CD8-positive, alpha-beta memory T cell (primary cell): ENCODE measurements at regions of chr2 and their contacts with region 1.

Region 1: GRCh38 chr2:3558205-3559014 is at the start of gene RNASEH1:
- DNase-seq: peak; percentile 96 to 98 (median 97)
- H3K4me3 ChIP-seq: peak within 1 kb of the TSS; percentile 49
- H3K4me3 Mint-ChIP-seq: peak within 1 kb of the TSS; percentile 88 to 98 (median 91)
- H3K27ac ChIP-seq: peak within 1 kb of the TSS; percentile 96
- H3K27ac Mint-ChIP-seq: peak within 1 kb of the TSS; percentile 94 to 99 (median 97)
- H3K4me1 ChIP-seq: peaks cover 18% of the 10 kb centered on the region
- H3K4me1 Mint-ChIP-seq: peaks cover 15 to 44% (median 38%) of the 10 kb centered on the region in 3 donors
- H3K27me3 ChIP-seq: no peaks in the 10 kb centered on the region
- H3K27me3 Mint-ChIP-seq: no peaks in the 10 kb centered on the region
- total RNA-seq, gene RNASEH1: 36.5 to 38.1 TPM

Region 2: GRCh38 chr2:3377612-3378432 is 180.6 kb before region 1 on chr2 and contains the start of gene EIPR1:
- CTCF ChIA-PET with region 1: interaction called, 4 read pairs
- POLR2A ChIA-PET with region 1: interaction called, 11 read pairs
- DNase-seq: peak; percentile 93 to 98 (median 96)
- H3K4me3 ChIP-seq: peak within 1 kb of the TSS; percentile 98
- H3K4me3 Mint-ChIP-seq: peak within 1 kb of the TSS; percentile 94 to 97 (median 97)
- H3K27ac ChIP-seq: peak within 1 kb of the TSS; percentile 90
- H3K27ac Mint-ChIP-seq: peak within 1 kb of the TSS; percentile 94 to 99 (median 98)
- H3K4me1 ChIP-seq: peaks cover 35% of the 10 kb centered on the region
- H3K4me1 Mint-ChIP-seq: peaks cover 46 to 62% (median 53%) of the 10 kb centered on the region in 3 donors
- H3K27me3 ChIP-seq: no peaks in the 10 kb centered on the region
- H3K27me3 Mint-ChIP-seq: peaks cover 0 to 1% of the 10 kb centered on the region in 2 donors
- total RNA-seq, gene EIPR1: 41.6 to 43.9 TPM

Region 3: DNA sequence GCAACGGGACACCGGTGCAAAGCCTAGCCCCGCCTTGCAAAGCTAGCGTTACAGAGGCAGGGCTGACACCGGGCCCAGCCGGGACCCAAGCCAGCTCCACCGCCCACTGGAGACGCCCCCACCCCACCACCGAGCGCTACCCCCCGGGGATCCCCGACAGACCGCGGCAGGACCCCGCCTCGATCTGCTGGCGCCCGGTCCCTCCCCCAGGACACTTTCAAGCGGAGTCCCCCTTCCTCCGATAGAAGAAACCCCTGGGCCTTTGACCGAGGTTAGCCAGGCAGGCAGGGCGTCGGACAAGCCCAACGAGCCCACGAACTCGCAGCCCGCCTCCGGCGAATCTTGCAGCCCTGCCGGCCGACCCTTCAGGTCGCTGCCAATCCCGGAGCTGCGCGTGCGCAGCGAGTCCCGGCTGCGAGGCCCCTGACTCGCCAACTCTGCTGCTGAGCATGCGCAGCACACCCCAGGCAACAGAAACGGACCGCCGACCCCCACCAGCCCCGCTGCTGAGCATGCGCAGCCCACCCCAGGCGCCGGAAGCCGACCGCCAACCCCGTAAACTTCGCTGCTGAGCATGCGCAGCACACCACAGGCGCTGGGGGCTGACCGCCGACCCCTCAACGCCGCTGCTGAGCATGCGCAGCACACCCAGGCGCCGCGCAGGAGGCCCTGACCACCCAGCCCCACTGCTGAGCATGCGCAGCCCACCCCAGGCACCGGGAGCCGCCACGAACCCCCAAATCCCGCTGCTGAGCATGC is 39.7 kb before region 1 on chr2:
- CTCF ChIA-PET with region 1: interaction called, 7 read pairs
- POLR2A ChIA-PET with region 1: interaction called, 32 read pairs
- DNase-seq: peak; percentile 97 to 100 (median 99)
- H3K4me3 ChIP-seq: peak overlapping the region; percentile 80
- H3K4me3 Mint-ChIP-seq: peak overlapping the region; percentile 84 to 95 (median 91)
- H3K27ac ChIP-seq: peak overlapping the region; percentile 93
- H3K27ac Mint-ChIP-seq: peak overlapping the region; percentile 91 to 97 (median 94)
- H3K4me1 ChIP-seq: peaks cover 26% of the 10 kb centered on the region
- H3K4me1 Mint-ChIP-seq: peaks cover 30 to 37% (median 33%) of the 10 kb centered on the region in 3 donors
- H3K27me3 ChIP-seq: no peaks in the 10 kb centered on the region
- H3K27me3 Mint-ChIP-seq: peaks cover 0 to 9% of the 10 kb centered on the region in 2 donors

Region 4: GRCh38 chr2:3575534-3576262 is 17.3 kb after region 1 on chr2:
- CTCF ChIA-PET with region 1: interaction called, 25 read pairs
- POLR2A ChIA-PET with region 1: interaction called, 24 read pairs
- DNase-seq: peak; percentile 26 to 60 (median 32)
- H3K4me3 ChIP-seq: peak overlapping the region; percentile 76
- H3K4me3 Mint-ChIP-seq: peak overlapping the region; percentile 90 to 98 (median 92)
- H3K27ac ChIP-seq: peak overlapping the region; percentile 85
- H3K27ac Mint-ChIP-seq: peak overlapping the region; percentile 96 to 99 (median 98)
- H3K4me1 ChIP-seq: peaks cover 36% of the 10 kb centered on the region
- H3K4me1 Mint-ChIP-seq: peaks cover 44 to 47% (median 46%) of the 10 kb centered on the region in 3 donors
- H3K27me3 ChIP-seq: no peaks in the 10 kb centered on the region
- H3K27me3 Mint-ChIP-seq: peaks cover 0 to 2% of the 10 kb centered on the region in 2 donors

Region 5: DNA sequence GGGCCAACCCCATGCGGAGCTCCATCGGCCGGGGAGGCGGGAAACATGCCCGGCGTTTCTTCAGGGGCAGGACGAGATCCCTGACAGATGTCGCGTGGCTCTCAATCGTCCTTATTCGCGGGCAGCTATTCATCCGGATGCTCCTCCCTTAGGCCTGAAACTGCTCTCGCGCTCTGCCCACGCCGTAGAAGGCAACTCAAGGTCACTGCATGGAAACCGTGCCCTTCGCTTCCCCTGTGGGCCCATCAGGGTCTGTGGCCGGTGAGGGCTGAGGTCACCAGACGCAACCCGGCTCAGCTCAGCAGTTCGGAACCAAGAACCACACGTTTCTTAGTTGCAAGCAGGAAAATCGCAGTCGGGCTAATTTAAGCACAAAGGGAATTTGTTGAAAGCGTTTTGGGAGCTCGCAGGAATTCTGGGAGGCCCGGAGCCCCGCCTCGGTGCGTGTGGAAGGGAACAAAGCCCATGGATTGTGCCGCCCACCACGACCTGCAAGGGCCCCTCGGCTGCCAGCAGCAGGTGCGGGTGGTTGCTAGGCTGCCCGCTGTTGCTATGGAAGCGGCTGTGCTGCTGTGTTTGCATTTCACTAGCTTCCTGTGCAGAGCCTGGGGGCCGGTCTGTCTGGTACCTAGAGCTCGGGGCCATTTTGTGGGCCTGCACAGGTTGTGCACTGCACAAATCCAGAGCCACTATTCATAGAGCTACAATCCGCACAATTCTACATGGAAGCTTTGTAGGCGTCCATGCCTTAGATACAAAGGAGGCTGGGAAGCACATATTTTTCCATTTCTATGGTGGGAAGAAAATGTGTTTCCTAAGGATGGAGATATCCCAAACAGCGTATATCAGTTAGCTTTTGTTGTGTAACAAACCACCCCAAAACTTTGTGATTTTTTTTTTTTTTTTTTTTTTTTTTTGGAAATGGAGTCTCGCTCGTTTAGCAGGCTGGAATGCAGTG is 93.6 kb after region 1 on chr2:
- CTCF ChIA-PET with region 1: interaction called, 11 read pairs
- POLR2A ChIA-PET with region 1: interaction called, 9 read pairs
- DNase-seq: peak; percentile 33 to 89 (median 75)
- H3K4me3 ChIP-seq: peak overlapping the region; percentile 66
- H3K4me3 Mint-ChIP-seq: peak overlapping the region; percentile 79 to 96 (median 89)
- H3K27ac ChIP-seq: peak overlapping the region; percentile 32
- H3K27ac Mint-ChIP-seq: peak overlapping the region in 7 of 8 donors; percentile 87 to 98 (median 95)
- H3K4me1 ChIP-seq: peaks cover 9% of the 10 kb centered on the region
- H3K4me1 Mint-ChIP-seq: peaks cover 11 to 18% (median 16%) of the 10 kb centered on the region in 3 donors
- H3K27me3 ChIP-seq: no peaks in the 10 kb centered on the region
- H3K27me3 Mint-ChIP-seq: peaks cover 0 to 11% of the 10 kb centered on the region in 2 donors

Region 6: DNA sequence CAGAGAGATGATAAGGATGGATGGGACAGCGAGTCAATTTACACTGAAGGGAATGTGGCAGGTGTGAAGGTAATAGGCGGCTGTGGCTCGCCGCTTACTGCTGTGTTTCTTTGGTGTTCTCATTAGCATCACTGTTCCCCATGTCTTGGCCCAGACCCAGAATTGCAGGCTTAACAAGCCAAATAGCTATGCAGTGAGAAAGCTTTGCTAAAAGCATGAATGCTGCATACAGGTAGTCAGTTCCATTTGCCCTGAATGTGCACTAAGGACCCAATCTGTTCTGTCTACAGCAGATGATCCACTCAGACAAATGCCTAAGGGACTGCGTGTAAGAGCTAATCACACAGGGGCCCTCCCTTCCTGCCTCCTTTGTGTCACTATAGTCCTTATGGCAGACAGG is 407.5 kb after region 1 on chr2:
- CTCF ChIA-PET with region 1: no interaction called
- POLR2A ChIA-PET with region 1: no interaction called
- DNase-seq: no peak
- H3K4me3 ChIP-seq: no peak overlapping the region
- H3K4me3 Mint-ChIP-seq: no peak overlapping the region
- H3K27ac ChIP-seq: no peak overlapping the region
- H3K27ac Mint-ChIP-seq: no peak overlapping the region
- H3K4me1 ChIP-seq: no peaks in the 10 kb centered on the region
- H3K4me1 Mint-ChIP-seq: no peaks in the 10 kb centered on the region
- H3K27me3 ChIP-seq: no peaks in the 10 kb centered on the region
- H3K27me3 Mint-ChIP-seq: peaks cover 0 to 4% of the 10 kb centered on the region in 2 donors

Region 7: DNA sequence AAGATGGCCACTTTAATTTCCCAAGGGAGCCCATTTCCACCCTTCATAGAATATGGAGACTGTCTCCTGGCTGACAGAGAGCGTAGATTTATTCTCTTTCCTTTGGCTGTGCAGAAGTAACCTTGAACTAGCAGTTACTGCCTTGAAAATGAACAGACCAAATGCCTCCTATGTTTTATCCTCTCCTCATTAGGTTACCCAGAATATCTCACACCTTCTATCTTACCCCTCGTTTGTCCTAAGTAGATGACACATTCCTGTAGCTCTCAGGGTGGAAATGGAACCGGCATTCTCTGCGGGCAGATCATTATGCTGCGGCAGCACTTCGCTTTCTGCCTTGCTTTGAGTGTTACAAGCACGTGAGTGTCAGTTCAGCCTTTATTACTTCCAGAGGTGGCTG is 481.5 kb after region 1 on chr2:
- CTCF ChIA-PET with region 1: no interaction called
- POLR2A ChIA-PET with region 1: no interaction called
- DNase-seq: no peak
- H3K4me3 ChIP-seq: no peak overlapping the region
- H3K4me3 Mint-ChIP-seq: no peak overlapping the region
- H3K27ac ChIP-seq: no peak overlapping the region
- H3K27ac Mint-ChIP-seq: peak overlapping the region in 1 of 8 donors; percentile 52
- H3K4me1 ChIP-seq: no peaks in the 10 kb centered on the region
- H3K4me1 Mint-ChIP-seq: peaks cover 0 to 3% (median 0%) of the 10 kb centered on the region in 3 donors
- H3K27me3 ChIP-seq: no peaks in the 10 kb centered on the region
- H3K27me3 Mint-ChIP-seq: peaks cover 0 to 7% of the 10 kb centered on the region in 2 donors